ENCODE measurements at regions of chr6 and their contacts with region 1.

Region 1: GRCh38 chr6:77072694-77073409 is 390.4 kb downstream of the HTR1B start:
- DNase-seq: no peak
- ATAC-seq: no peak
- H3K4me3 ChIP-seq: no peak overlapping the region
- H3K27ac ChIP-seq: no peak overlapping the region
- H3K4me1 ChIP-seq: no peaks in the 10 kb centered on the region
- H3K27me3 ChIP-seq: no peaks in the 10 kb centered on the region
- CTCF ChIP-seq: no peak

Region 2: GRCh38 chr6:76701610-76702009 is 371.2 kb before region 1 on chr6:
- intact Hi-C with region 1: no loop called
- DNase-seq: no peak
- ATAC-seq: no peak
- H3K4me3 ChIP-seq: no peak overlapping the region
- H3K27ac ChIP-seq: no peak overlapping the region
- H3K4me1 ChIP-seq: peaks cover 0 to 3% (median 0%) of the 10 kb centered on the region in 9 donors
- H3K27me3 ChIP-seq: no peaks in the 10 kb centered on the region
- CTCF ChIP-seq: no peak

Region 3: GRCh38 chr6:77124604-77125003 is 51.8 kb after region 1 on chr6:
- intact Hi-C with region 1: loop called in 1 of 10 experiments (anchors 2 kb)
- DNase-seq: no peak
- ATAC-seq: no peak
- H3K4me3 ChIP-seq: no peak overlapping the region
- H3K27ac ChIP-seq: no peak overlapping the region
- H3K4me1 ChIP-seq: no peaks in the 10 kb centered on the region
- H3K27me3 ChIP-seq: no peaks in the 10 kb centered on the region
- CTCF ChIP-seq: no peak